Naive thymus-derived CD4-positive, alpha-beta T cell (primary cell): ENCODE measurements at regions of chr4 and their contacts with region 1.

Region 1: GRCh38 chr4:148415500-148415899 is 26.7 kb downstream of the NR3C2 start:
- DNase-seq: no peak
- ATAC-seq: no peak
- H3K4me3 ChIP-seq: no peak overlapping the region
- H3K4me3 Mint-ChIP-seq: peak overlapping the region in 2 of 10 donors; percentile 2 to 30
- H3K27ac ChIP-seq: no peak overlapping the region
- H3K27ac Mint-ChIP-seq: no peak overlapping the region
- H3K4me1 ChIP-seq: peaks cover 0 to 7% of the 10 kb centered on the region in 2 donors
- H3K4me1 Mint-ChIP-seq: peaks cover 0 to 92% (median 75%) of the 10 kb centered on the region in 7 donors
- H3K27me3 ChIP-seq: no peaks in the 10 kb centered on the region
- H3K27me3 Mint-ChIP-seq: no peaks in the 10 kb centered on the region

Region 2: GRCh38 chr4:148025981-148026380 is 389.5 kb before region 1 on chr4:
- CTCF ChIA-PET with region 1: no interaction called
- POLR2A ChIA-PET with region 1: no interaction called
- intact Hi-C with region 1: loop called in 1 of 2 experiments (anchors 2 kb)
- DNase-seq: no peak
- ATAC-seq: no peak
- H3K4me3 ChIP-seq: no peak overlapping the region
- H3K4me3 Mint-ChIP-seq: no peak overlapping the region
- H3K27ac ChIP-seq: no peak overlapping the region
- H3K27ac Mint-ChIP-seq: peak overlapping the region in 3 of 9 donors; percentile 1 to 73 (median 38)
- H3K4me1 ChIP-seq: no peaks in the 10 kb centered on the region
- H3K4me1 Mint-ChIP-seq: peaks cover 0 to 6% (median 0%) of the 10 kb centered on the region in 7 donors
- H3K27me3 ChIP-seq: no peaks in the 10 kb centered on the region
- H3K27me3 Mint-ChIP-seq: no peaks in the 10 kb centered on the region

Region 3: GRCh38 chr4:148090503-148091476 is 324.7 kb before region 1 on chr4:
- CTCF ChIA-PET with region 1: no interaction called
- POLR2A ChIA-PET with region 1: no interaction called
- intact Hi-C with region 1: no loop called
- DNase-seq: no peak
- ATAC-seq: no peak
- H3K4me3 ChIP-seq: no peak overlapping the region
- H3K4me3 Mint-ChIP-seq: no peak overlapping the region
- H3K27ac ChIP-seq: no peak overlapping the region
- H3K27ac Mint-ChIP-seq: peak overlapping the region in 3 of 9 donors; percentile 65 to 72 (median 71)
- H3K4me1 ChIP-seq: no peaks in the 10 kb centered on the region
- H3K4me1 Mint-ChIP-seq: peaks cover 0 to 49% (median 27%) of the 10 kb centered on the region in 7 donors
- H3K27me3 ChIP-seq: no peaks in the 10 kb centered on the region
- H3K27me3 Mint-ChIP-seq: no peaks in the 10 kb centered on the region

Region 4: DNA sequence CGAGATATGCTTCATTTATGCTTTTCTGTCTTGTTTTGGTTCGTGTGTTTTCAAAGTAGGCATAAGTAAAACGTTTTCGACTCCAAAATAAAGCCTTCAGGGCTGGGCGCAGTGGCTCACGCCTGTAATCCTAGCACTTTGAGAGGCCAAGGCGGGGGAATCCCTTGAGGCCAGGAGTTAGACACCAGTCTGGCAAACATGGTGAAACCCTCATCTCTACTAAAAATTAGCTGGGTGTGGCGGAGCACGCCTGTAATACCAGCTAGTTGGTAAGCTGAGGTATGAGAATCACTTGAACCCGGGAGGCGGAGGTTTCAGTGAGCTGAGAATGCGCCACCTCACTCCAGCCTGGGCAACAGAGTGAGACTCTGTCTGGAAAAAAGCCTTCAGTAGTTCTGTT is 237.5 kb before region 1 on chr4:
- CTCF ChIA-PET with region 1: no interaction called
- POLR2A ChIA-PET with region 1: no interaction called
- intact Hi-C with region 1: loop called in 1 of 2 experiments (anchors 5 kb)
- DNase-seq: no peak
- ATAC-seq: no peak
- H3K4me3 ChIP-seq: no peak overlapping the region
- H3K4me3 Mint-ChIP-seq: no peak overlapping the region
- H3K27ac ChIP-seq: no peak overlapping the region
- H3K27ac Mint-ChIP-seq: no peak overlapping the region
- H3K4me1 ChIP-seq: no peaks in the 10 kb centered on the region
- H3K4me1 Mint-ChIP-seq: peaks cover 0 to 34% (median 22%) of the 10 kb centered on the region in 7 donors
- H3K27me3 ChIP-seq: no peaks in the 10 kb centered on the region
- H3K27me3 Mint-ChIP-seq: peaks cover 0 to 2% (median 0%) of the 10 kb centered on the region in 5 donors

Region 5: GRCh38 chr4:148283665-148284064 is 131.8 kb before region 1 on chr4:
- CTCF ChIA-PET with region 1: no interaction called
- POLR2A ChIA-PET with region 1: no interaction called
- intact Hi-C with region 1: loop called in 1 of 2 experiments (anchors 5 kb)
- DNase-seq: no peak
- ATAC-seq: no peak
- H3K4me3 ChIP-seq: no peak overlapping the region
- H3K4me3 Mint-ChIP-seq: no peak overlapping the region
- H3K27ac ChIP-seq: no peak overlapping the region
- H3K27ac Mint-ChIP-seq: no peak overlapping the region
- H3K4me1 ChIP-seq: no peaks in the 10 kb centered on the region
- H3K4me1 Mint-ChIP-seq: peaks cover 0 to 59% (median 37%) of the 10 kb centered on the region in 7 donors
- H3K27me3 ChIP-seq: no peaks in the 10 kb centered on the region
- H3K27me3 Mint-ChIP-seq: no peaks in the 10 kb centered on the region

Region 6: DNA sequence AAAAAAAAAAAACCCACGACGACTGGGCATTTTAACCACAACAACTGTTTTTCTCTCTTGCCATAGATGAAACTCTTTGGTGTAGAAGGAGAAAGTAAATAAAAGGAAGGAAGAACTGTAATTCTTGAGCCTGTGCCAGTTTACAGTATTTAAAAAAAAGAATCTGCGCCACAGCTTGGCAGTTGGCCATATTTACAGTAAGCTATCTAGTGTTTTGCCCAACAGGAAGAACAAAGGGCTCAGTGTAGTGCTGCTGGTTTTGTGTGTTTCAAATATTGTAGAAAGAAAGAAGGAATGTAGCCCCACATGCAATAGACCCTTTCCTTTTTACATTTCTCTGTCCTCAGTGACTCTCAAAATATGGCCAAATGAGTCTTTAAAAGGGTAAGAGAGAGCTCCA is 39.3 kb before region 1 on chr4:
- CTCF ChIA-PET with region 1: no interaction called
- POLR2A ChIA-PET with region 1: no interaction called
- intact Hi-C with region 1: loop called in 1 of 2 experiments (anchors 5 kb)
- DNase-seq: peak in 7 of 9 donors; percentile 64 to 84 (median 76)
- ATAC-seq: peak; percentile 86
- H3K4me3 ChIP-seq: peak overlapping the region; percentile 37
- H3K4me3 Mint-ChIP-seq: peak overlapping the region in 9 of 10 donors; percentile 67 to 88 (median 82)
- H3K27ac ChIP-seq: peak overlapping the region; percentile 59
- H3K27ac Mint-ChIP-seq: peak overlapping the region in 8 of 9 donors; percentile 88 to 99 (median 92)
- H3K4me1 ChIP-seq: peaks cover 0 to 8% of the 10 kb centered on the region in 2 donors
- H3K4me1 Mint-ChIP-seq: peaks cover 6 to 61% (median 44%) of the 10 kb centered on the region in 7 donors
- H3K27me3 ChIP-seq: no peaks in the 10 kb centered on the region
- H3K27me3 Mint-ChIP-seq: no peaks in the 10 kb centered on the region

Region 7: DNA sequence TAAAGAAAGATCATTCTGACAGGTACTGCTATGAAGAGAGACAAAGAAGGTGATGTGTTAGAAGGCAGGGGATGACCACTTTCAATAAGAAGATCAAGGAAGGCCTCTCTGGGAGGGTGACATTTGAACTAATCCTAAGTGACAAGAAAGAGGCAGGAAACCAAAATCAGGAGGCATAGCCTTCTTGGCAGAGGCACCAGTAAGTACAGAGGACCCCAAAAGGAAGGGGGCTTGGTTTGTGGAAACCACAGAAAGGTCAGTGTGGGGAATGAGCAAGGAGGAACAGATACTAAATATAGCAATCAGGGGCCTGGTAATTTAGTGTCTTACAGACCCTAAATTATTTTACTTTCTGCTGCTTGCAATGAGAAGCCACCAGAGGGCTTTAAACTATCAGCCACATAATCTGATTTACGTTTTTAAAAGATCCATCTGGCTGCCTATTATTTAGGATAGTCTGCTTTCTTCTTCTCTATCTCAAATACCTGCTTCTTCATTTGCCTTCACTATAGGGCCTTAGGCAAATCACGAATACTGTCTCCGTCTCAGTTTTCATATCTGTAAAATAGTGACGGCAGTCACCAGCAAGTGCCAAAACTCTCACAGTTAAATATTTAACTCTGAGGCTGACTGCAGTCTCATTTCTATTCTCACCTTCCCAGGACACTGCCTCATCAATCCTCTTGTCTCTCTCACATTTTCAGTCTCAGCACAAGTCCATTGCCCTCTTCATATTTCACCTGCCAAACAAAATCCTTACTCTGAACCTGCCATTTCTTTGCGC is 10.0 kb after region 1 on chr4:
- CTCF ChIA-PET with region 1: no interaction called
- POLR2A ChIA-PET with region 1: no interaction called
- intact Hi-C with region 1: loop called in 1 of 2 experiments (anchors 1 kb)
- DNase-seq: no peak
- ATAC-seq: no peak
- H3K4me3 ChIP-seq: no peak overlapping the region
- H3K4me3 Mint-ChIP-seq: peak overlapping the region in 6 of 10 donors; percentile 0 to 53 (median 20)
- H3K27ac ChIP-seq: no peak overlapping the region
- H3K27ac Mint-ChIP-seq: peak overlapping the region in 1 of 9 donors; percentile 5
- H3K4me1 ChIP-seq: peaks cover 4 to 16% of the 10 kb centered on the region in 2 donors
- H3K4me1 Mint-ChIP-seq: peaks cover 0 to 100% (median 84%) of the 10 kb centered on the region in 7 donors
- H3K27me3 ChIP-seq: no peaks in the 10 kb centered on the region
- H3K27me3 Mint-ChIP-seq: no peaks in the 10 kb centered on the region